H1 (cell line): ENCODE measurements at regions of chr2 and their contacts with region 1.

Region 1: GRCh38 chr2:10688921-10689807 is 611 bp downstream of the NOL10 start:
- DNase-seq: no peak
- H3K4me3 ChIP-seq: peak overlapping the region; percentile 95 to 100 (median 97)
- H3K27ac ChIP-seq: peak overlapping the region; percentile 85
- H3K4me1 ChIP-seq: peaks cover 0 to 6% (median 4%) of the 10 kb centered on the region in 4 experiments; a peak in 4 of 7 replicates
- H3K27me3 ChIP-seq: no peaks in the 10 kb centered on the region
- CTCF ChIP-seq: no peak
- EP300 ChIP-seq: no peak
- POLR2A ChIP-seq: no peak
- RAD21 ChIP-seq: no peak

Region 2: GRCh38 chr2:10678222-10678621 is 10.9 kb before region 1 on chr2:
- CTCF ChIA-PET with region 1: interaction called, 7 read pairs
- POLR2A ChIA-PET with region 1: interaction called, 13 read pairs
- DNase-seq: no peak
- H3K4me3 ChIP-seq: no peak overlapping the region
- H3K27ac ChIP-seq: no peak overlapping the region
- H3K4me1 ChIP-seq: no peaks in the 10 kb centered on the region
- H3K27me3 ChIP-seq: no peaks in the 10 kb centered on the region
- CTCF ChIP-seq: peak in 1 of 3 experiments; percentile 15; a peak in 1 of 4 replicates
- EP300 ChIP-seq: no peak
- POLR2A ChIP-seq: no peak
- RAD21 ChIP-seq: no peak